Activated CD4-positive, alpha-beta T cell treated with anti-CD3 and anti-CD28 coated beads for 36 hours (primary cell): ENCODE measurements at regions of chr2 and their contacts with region 1.

Region 1: DNA sequence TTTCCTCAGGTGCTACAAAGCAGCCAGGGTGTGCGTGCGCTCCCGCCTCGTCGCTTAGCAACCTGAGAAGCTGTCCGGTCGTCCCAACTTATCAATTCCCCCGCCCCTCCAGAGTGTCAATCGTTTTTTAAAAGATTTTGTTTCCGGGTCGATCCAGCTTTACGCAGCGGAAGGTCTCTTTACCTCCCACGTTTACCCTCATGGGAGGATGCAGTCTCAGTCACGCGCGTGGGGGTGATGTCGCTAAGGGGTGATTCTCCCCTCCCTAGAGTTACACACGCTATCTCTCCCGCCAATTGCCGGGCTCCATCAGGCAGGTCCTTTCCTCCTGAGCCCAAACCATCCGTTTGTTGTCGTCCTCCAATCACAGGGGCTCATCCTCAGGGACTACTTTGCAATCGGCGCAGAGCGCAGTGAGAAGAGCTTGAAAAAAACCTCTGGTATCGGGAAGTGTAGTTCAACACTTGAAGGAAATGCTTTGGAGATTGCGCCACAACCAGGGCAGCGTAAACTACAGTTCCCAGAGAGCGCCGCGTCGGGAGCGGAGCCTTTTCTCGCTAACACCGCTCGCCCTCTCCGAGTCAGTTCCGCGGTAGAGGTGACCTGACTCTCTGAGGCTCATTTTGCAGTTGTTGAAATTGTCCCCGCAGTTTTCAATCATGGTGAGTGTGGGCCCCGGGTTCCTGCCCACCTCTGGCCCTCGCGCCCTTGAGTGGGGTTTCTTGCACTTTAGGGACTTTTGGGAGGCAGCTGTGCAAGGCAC is at the starts of genes MDH1 and WDPCP:
- DNase-seq: peak; percentile 96
- ATAC-seq: peak; percentile 92
- H3K4me3 Mint-ChIP-seq: peak within 1 kb of the TSS; percentile 100
- H3K27ac Mint-ChIP-seq: peak within 1 kb of the TSS; percentile 97
- H3K4me1 Mint-ChIP-seq: peaks cover 36% of the 10 kb centered on the region
- H3K27me3 Mint-ChIP-seq: no peaks in the 10 kb centered on the region
- total RNA-seq, gene MDH1: 212 to 265 TPM
- total RNA-seq, gene WDPCP: 6.5 to 8.2 TPM

Region 2: DNA sequence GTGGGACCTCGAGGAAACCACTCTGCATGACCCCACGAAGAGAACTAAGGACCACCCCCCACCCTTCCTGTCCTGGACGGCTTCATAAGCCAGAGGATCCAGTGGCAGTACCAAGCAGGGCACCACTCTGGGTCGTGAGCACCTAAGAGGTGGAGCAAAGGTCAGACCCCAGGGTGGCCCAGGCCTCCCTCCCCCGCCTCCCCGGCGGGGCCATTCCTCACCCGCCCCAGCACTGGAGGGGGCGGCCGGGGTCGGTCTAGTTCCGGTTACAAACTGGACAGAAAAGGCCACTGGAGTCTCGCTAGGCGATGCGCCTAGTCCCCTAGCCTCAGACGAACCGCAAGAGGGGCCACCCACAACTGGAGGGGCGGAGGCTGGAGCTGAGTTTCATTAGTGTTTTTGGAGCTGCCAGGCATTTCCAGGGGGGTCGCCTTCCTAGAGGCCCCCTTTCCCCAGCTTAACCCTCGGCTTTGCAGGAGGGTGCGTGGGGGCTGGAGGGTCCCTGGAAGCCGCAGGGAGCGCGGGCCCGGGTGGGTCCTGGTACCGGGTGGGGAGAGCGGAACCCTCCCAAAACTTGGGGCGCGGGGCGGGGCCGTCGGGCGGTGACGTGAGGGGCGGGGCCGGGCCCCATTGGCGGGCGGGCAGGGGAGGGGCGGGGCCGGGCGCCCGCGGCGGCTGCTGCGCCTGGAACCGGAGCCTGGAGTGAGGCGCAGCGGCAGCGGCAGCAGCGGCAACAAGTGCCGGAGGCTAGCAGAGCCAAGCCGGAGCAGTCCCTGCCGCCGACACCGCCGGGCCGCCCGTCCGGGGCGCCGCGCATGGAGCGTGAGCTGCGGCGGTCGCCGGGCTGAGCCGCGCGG is 1392.9 kb before region 1 on chr2 and contains the start of gene B3GNT2:
- CTCF ChIA-PET with region 1: no interaction called
- POLR2A ChIA-PET with region 1: interaction called, 4 read pairs
- intact Hi-C with region 1: loop called in 1 of 2 experiments (anchors 1 kb)
- DNase-seq: peak; percentile 92
- ATAC-seq: peak; percentile 62
- H3K4me3 Mint-ChIP-seq: peak within 1 kb of the TSS; percentile 92
- H3K27ac Mint-ChIP-seq: peak within 1 kb of the TSS; percentile 92
- H3K4me1 Mint-ChIP-seq: peaks cover 28% of the 10 kb centered on the region
- H3K27me3 Mint-ChIP-seq: no peaks in the 10 kb centered on the region
- total RNA-seq, gene B3GNT2: 28.6 to 31.7 TPM

Region 3: DNA sequence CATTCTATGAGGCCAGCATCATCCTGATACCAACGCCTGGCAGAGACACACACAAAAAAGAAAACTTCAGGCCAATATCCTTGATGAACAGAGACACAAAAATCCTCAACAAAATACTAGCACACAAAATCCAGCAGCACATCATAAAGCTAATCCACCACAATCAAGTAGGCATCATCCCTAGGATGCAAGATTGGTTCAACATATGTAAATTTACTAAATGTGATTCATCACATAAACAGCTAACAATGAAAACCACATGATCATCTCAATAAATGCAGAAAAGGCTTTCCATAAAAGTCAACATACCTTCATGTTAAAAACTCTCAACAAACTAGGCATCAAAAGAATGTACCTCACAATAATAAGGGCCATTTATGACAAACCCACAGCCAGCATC is 65.6 kb before region 1 on chr2:
- CTCF ChIA-PET with region 1: interaction called, 4 read pairs
- POLR2A ChIA-PET with region 1: interaction called, 15 read pairs
- intact Hi-C with region 1: no loop called
- DNase-seq: no peak
- ATAC-seq: no peak
- H3K4me3 Mint-ChIP-seq: no peak overlapping the region
- H3K27ac Mint-ChIP-seq: no peak overlapping the region
- H3K4me1 Mint-ChIP-seq: no peaks in the 10 kb centered on the region
- H3K27me3 Mint-ChIP-seq: no peaks in the 10 kb centered on the region

Region 4: GRCh38 chr2:63856303-63856603 is 267.7 kb after region 1 on chr2:
- CTCF ChIA-PET with region 1: interaction called, 4 read pairs
- POLR2A ChIA-PET with region 1: interaction called, 3 read pairs
- intact Hi-C with region 1: loop called (anchors 5 kb)
- DNase-seq: peak; percentile 63
- ATAC-seq: peak; percentile 89
- H3K4me3 Mint-ChIP-seq: peak overlapping the region; percentile 40
- H3K27ac Mint-ChIP-seq: peak overlapping the region; percentile 83
- H3K4me1 Mint-ChIP-seq: peaks cover 51% of the 10 kb centered on the region
- H3K27me3 Mint-ChIP-seq: no peaks in the 10 kb centered on the region

Region 5: GRCh38 chr2:64144057-64145013 is 555.8 kb after region 1 on chr2 and contains the start of gene PELI1:
- CTCF ChIA-PET with region 1: no interaction called
- POLR2A ChIA-PET with region 1: no interaction called
- intact Hi-C with region 1: loop called in 1 of 2 experiments (anchors 1 kb)
- DNase-seq: peak; percentile 97
- ATAC-seq: peak; percentile 89
- H3K4me3 Mint-ChIP-seq: peak within 1 kb of the TSS; percentile 84
- H3K27ac Mint-ChIP-seq: peak within 1 kb of the TSS; percentile 97
- H3K4me1 Mint-ChIP-seq: peaks cover 30% of the 10 kb centered on the region
- H3K27me3 Mint-ChIP-seq: no peaks in the 10 kb centered on the region
- total RNA-seq, gene PELI1: 21.3 to 29.7 TPM